ENCODE measurements at regions of chr1 and their contacts with region 1.

Region 1: DNA sequence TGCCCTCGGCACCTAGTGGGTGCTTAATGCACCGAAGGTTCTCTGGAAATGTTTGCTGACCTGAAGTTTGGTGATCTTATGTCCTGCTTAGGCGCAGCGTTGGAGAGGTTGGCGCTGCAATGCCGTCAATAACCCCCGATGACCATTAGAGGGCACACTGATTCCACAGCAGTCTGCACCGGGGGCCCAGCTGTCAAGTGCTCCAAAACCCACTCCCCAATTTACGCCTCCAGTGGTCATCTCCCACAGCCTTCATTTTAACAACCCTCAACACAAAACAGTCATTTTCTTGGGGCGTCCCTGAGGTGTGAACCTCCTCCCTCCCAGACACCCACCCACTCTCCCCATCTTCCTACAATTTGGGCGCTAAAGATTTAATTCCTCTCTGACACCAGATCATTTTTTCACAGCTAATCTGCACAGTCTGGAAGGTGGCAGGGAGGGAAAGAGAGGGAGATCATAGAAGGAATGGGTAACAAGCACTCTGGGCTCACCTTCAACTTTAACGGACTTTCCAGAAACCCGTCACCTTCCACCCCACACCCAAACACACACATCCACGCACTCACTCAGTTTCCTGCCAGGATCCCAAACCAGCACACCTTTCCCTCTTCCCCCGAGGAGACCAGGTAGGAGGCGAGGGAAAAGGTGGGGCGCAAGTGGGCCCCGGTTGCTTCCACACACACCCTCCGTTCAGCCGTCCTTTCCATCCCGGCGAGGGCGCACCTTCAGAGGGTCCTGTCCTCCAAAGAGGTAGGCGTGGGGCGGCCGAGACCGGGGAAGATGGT is 576 bp upstream of the NPR1 start:
- DNase-seq: no peak
- ATAC-seq: peak; percentile 75
- H3K4me3 ChIP-seq: peak overlapping the region; percentile 47; the same call in 1 of the 2 replicates
- H3K27ac ChIP-seq: no peak overlapping the region
- H3K4me1 ChIP-seq: peaks cover 16% of the 10 kb centered on the region
- H3K27me3 ChIP-seq: peaks cover 14 to 23% of the 10 kb centered on the region in 2 experiments
- CTCF ChIP-seq: peak; percentile 94 to 95 (median 95)
- EP300 ChIP-seq: no peak
- POLR2A ChIP-seq: no peak
- RAD21 ChIP-seq: peak; percentile 90

Region 2: GRCh38 chr1:153742411-153743142 is 64.7 kb after region 1 on chr1:
- CTCF ChIA-PET with region 1: interaction called, 84 read pairs
- POLR2A ChIA-PET with region 1: interaction called, 6 read pairs
- RAD21 ChIA-PET with region 1: interaction called, 12 read pairs
- SMC1A ChIA-PET with region 1: interaction called, 55 read pairs
- in situ Hi-C with region 1: loop called (anchors 5 kb)
- intact Hi-C with region 1: no loop called
- DNase-seq: peak; percentile 80
- ATAC-seq: peak; percentile 87
- H3K4me3 ChIP-seq: peak overlapping the region; percentile 7; the same call in 1 of the 2 replicates
- H3K27ac ChIP-seq: peak overlapping the region; percentile 77
- H3K4me1 ChIP-seq: peaks cover 32% of the 10 kb centered on the region
- H3K27me3 ChIP-seq: no peaks in the 10 kb centered on the region
- CTCF ChIP-seq: no peak
- EP300 ChIP-seq: peak; percentile 67 to 86; a peak in 2 of 4 replicates
- POLR2A ChIP-seq: no peak
- RAD21 ChIP-seq: no peak

Region 3: GRCh38 chr1:153749408-153750005 is 71.6 kb after region 1 on chr1:
- CTCF ChIA-PET with region 1: interaction called, 84 read pairs
- POLR2A ChIA-PET with region 1: interaction called, 9 read pairs
- RAD21 ChIA-PET with region 1: interaction called, 12 read pairs
- SMC1A ChIA-PET with region 1: interaction called, 55 read pairs
- in situ Hi-C with region 1: loop called (anchors 5 kb)
- intact Hi-C with region 1: loop called (anchors 1 kb)
- DNase-seq: peak; percentile 48
- ATAC-seq: peak; percentile 100
- H3K4me3 ChIP-seq: no peak overlapping the region
- H3K27ac ChIP-seq: no peak overlapping the region
- H3K4me1 ChIP-seq: no peaks in the 10 kb centered on the region; the same call in 1 of the 2 replicates
- H3K27me3 ChIP-seq: no peaks in the 10 kb centered on the region
- CTCF ChIP-seq: peak; percentile 97 to 99 (median 99); a peak in 5 of 6 replicates
- EP300 ChIP-seq: no peak
- POLR2A ChIP-seq: no peak
- RAD21 ChIP-seq: peak; percentile 82

Region 4: GRCh38 chr1:153771841-153772593 is 94.1 kb after region 1 on chr1:
- CTCF ChIA-PET with region 1: interaction called, 18 read pairs
- POLR2A ChIA-PET with region 1: no interaction called
- RAD21 ChIA-PET with region 1: interaction called, 5 read pairs
- SMC1A ChIA-PET with region 1: interaction called, 6 read pairs
- in situ Hi-C with region 1: no loop called
- intact Hi-C with region 1: loop called (anchors 2 kb)
- DNase-seq: no peak
- ATAC-seq: no peak
- H3K4me3 ChIP-seq: no peak overlapping the region
- H3K27ac ChIP-seq: no peak overlapping the region
- H3K4me1 ChIP-seq: peaks cover 3% of the 10 kb centered on the region
- H3K27me3 ChIP-seq: no peaks in the 10 kb centered on the region
- CTCF ChIP-seq: peak; percentile 47 to 51 (median 48)
- EP300 ChIP-seq: no peak
- POLR2A ChIP-seq: no peak
- RAD21 ChIP-seq: peak; percentile 31; the same call in 1 of the 2 replicates

Region 5: DNA sequence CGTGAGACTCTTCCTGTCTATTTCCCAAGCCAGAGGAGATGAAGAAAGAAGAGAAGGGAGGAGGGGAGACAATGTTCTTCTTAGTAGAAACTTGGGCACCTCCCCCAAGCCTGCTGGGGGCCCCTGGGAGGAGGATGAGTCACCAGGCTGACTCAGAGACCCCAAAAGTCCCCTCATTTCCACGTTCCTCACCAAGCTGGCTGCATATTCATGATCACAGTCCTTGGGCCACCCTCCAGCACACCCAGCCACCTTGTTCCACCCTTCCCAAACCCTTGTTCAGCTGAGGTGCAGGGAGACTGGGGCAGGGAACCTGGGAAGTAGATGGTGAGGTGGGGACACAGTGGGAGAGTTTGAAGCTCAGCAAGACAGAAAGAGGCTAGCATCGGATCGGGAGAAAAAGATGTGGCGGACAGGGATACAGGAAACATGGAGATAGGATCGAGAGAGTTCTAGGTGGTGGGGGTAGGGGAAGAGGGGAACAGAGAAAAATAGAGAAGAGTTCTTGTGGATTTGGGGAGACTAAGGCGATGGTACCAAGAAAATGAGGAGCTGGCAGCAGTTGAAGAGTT is 307.5 kb after region 1 on chr1:
- CTCF ChIA-PET with region 1: interaction called, 32 read pairs
- POLR2A ChIA-PET with region 1: interaction called, 6 read pairs
- RAD21 ChIA-PET with region 1: interaction called, 14 read pairs
- SMC1A ChIA-PET with region 1: interaction called, 12 read pairs
- in situ Hi-C with region 1: loop called (anchors 5 kb)
- intact Hi-C with region 1: loop called (anchors 2 kb)
- DNase-seq: no peak
- ATAC-seq: peak; percentile 22
- H3K4me3 ChIP-seq: peak overlapping the region; percentile 80; the same call in 1 of the 2 replicates
- H3K27ac ChIP-seq: no peak overlapping the region
- H3K4me1 ChIP-seq: peaks cover 5% of the 10 kb centered on the region
- H3K27me3 ChIP-seq: no peaks in the 10 kb centered on the region
- CTCF ChIP-seq: no peak
- EP300 ChIP-seq: no peak
- POLR2A ChIP-seq: no peak
- RAD21 ChIP-seq: no peak

Measured in GM12878 (cell line).